GM12878 (cell line): ENCODE measurements at regions of chr9 and their contacts with region 1.

Region 1: GRCh38 chr9:131733541-131734061 is 6.3 kb downstream of the RAPGEF1 start:
- DNase-seq: no peak
- ATAC-seq: peak; percentile 2
- H3K4me3 ChIP-seq: peak overlapping the region; percentile 70
- H3K27ac ChIP-seq: peak overlapping the region; percentile 99
- H3K4me1 ChIP-seq: peaks cover 75% of the 10 kb centered on the region
- H3K27me3 ChIP-seq: no peaks in the 10 kb centered on the region
- CTCF ChIP-seq: no peak
- EP300 ChIP-seq: no peak
- POLR2A ChIP-seq: peak; percentile 42
- RAD21 ChIP-seq: no peak

Region 2: GRCh38 chr9:131270171-131271015 is 463.2 kb before region 1 on chr9:
- CTCF ChIA-PET with region 1: no interaction called
- POLR2A ChIA-PET with region 1: no interaction called
- RAD21 ChIA-PET with region 1: no interaction called
- SMC1A ChIA-PET with region 1: no interaction called
- in situ Hi-C with region 1: loop called (anchors 10 kb)
- intact Hi-C with region 1: no loop called
- DNase-seq: no peak
- ATAC-seq: peak; percentile 31
- H3K4me3 ChIP-seq: peak overlapping the region; percentile 99
- H3K27ac ChIP-seq: peak overlapping the region; percentile 92
- H3K4me1 ChIP-seq: peaks cover 46% of the 10 kb centered on the region
- H3K27me3 ChIP-seq: no peaks in the 10 kb centered on the region
- CTCF ChIP-seq: no peak
- EP300 ChIP-seq: no peak
- POLR2A ChIP-seq: peak; percentile 46; the same call in 1 of the 2 replicates
- RAD21 ChIP-seq: no peak

Region 3: GRCh38 chr9:131627648-131628458 is 105.7 kb before region 1 on chr9:
- CTCF ChIA-PET with region 1: interaction called, 19 read pairs
- POLR2A ChIA-PET with region 1: interaction called, 30 read pairs
- RAD21 ChIA-PET with region 1: interaction called, 52 read pairs
- SMC1A ChIA-PET with region 1: interaction called, 58 read pairs
- in situ Hi-C with region 1: no loop called
- intact Hi-C with region 1: loop called (anchors 5 kb)
- DNase-seq: no peak
- ATAC-seq: peak; percentile 48
- H3K4me3 ChIP-seq: no peak overlapping the region
- H3K27ac ChIP-seq: peak overlapping the region; percentile 88
- H3K4me1 ChIP-seq: peaks cover 44% of the 10 kb centered on the region
- H3K27me3 ChIP-seq: no peaks in the 10 kb centered on the region
- CTCF ChIP-seq: no peak
- EP300 ChIP-seq: no peak
- POLR2A ChIP-seq: 0 out of 2 replicates have a peak, but pooled peaks have one; percentile 22
- RAD21 ChIP-seq: no peak

Region 4: DNA sequence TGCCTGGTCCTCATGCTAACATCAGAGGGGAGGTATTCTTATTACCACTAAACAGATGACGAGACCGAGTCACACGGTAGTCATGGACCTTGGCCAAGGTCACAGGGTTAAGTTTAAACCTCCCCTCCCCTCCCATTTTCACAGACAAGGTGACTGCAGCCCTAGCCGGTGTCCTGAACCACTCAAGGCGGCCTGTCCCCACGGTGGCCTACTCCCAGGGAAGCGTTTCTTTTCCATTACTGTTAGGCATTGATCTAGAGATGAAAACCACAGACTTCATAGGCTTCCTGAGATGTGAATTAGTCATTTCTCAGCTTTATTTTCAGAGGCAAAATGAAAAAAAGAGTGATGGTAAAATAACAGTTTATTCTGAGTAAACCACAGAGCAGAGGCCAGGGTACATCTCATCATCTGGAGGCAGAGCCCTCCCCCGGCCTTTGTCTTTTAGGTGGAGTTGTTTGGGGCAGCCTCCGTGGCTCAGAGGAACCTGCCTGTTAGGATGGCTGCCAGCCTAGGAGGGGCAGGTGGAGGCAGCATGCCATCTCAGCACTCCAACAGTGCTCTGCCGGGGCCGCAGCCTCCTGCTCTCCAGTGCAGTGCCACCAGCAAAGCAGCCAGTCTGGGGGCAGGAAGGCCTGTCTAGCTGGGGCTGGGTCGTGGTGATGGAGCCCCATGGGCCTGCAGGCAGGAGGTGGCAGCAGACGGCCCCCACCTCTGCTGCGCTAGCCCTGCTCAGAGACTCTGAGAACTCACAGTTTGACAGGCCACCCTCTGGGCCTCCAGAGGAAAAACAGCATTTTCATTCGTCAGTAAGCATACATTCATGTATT is 64.9 kb before region 1 on chr9:
- CTCF ChIA-PET with region 1: interaction called, 197 read pairs
- POLR2A ChIA-PET with region 1: interaction called, 271 read pairs
- RAD21 ChIA-PET with region 1: interaction called, 408 read pairs
- SMC1A ChIA-PET with region 1: interaction called, 535 read pairs
- in situ Hi-C with region 1: no loop called
- intact Hi-C with region 1: loop called (anchors 2 kb)
- DNase-seq: peak; percentile 62
- ATAC-seq: peak; percentile 74
- H3K4me3 ChIP-seq: peak overlapping the region; percentile 54
- H3K27ac ChIP-seq: peak overlapping the region; percentile 88
- H3K4me1 ChIP-seq: peaks cover 72% of the 10 kb centered on the region
- H3K27me3 ChIP-seq: no peaks in the 10 kb centered on the region
- CTCF ChIP-seq: peak; percentile 3 to 5 (median 4); a peak in 1 of 6 replicates
- EP300 ChIP-seq: peak; percentile 25 to 47; a peak in 2 of 4 replicates
- POLR2A ChIP-seq: peak; percentile 11; the same call in 1 of the 2 replicates
- RAD21 ChIP-seq: no peak; the same call in 1 of the 2 replicates

Region 5: DNA sequence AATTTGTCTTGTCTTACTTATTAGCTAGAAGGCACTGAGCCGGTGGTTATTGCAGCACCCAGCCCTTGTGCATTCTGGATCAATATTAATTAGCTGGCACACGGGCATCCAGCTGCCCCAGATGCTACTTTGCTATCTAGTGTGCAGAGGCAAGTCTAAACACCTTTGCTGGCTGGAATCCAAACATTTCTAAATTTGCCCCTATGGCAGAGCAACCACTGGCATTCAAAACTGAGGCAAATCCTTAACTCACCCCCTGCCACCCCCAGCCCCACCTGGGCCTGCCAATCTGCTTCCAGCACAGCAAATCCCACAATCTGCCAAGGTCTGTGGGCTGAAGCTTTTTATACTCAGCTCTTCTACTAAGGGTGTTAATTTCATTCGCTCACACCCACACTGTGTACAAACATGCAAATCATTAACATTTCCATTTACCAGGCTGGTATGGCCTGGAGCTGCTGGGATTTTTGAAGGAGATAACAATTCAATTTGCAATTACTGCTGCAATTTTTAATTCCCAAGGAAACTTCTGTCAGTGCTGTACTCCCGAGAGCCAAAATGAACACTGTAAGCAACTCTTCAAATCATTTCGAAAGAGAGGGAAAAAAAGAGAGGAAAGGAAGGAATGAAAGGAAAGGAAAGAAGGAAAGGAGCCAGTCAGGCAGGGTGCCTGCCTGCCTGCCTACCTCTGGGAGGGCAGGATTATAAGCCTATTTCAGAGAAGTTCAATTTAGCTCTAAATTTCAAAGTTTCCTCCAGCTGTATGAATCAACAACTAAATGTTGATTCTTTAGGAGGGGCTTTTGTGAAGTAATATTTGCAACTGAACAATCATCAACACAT is 29.2 kb before region 1 on chr9:
- CTCF ChIA-PET with region 1: interaction called, 53 read pairs
- POLR2A ChIA-PET with region 1: interaction called, 291 read pairs
- RAD21 ChIA-PET with region 1: interaction called, 362 read pairs
- SMC1A ChIA-PET with region 1: interaction called, 416 read pairs
- in situ Hi-C with region 1: no loop called
- intact Hi-C with region 1: loop called (anchors 5 kb)
- DNase-seq: no peak
- ATAC-seq: peak; percentile 12; the same call in 1 of the 3 replicates
- H3K4me3 ChIP-seq: no peak overlapping the region
- H3K27ac ChIP-seq: peak overlapping the region; percentile 83
- H3K4me1 ChIP-seq: peaks cover 63% of the 10 kb centered on the region
- H3K27me3 ChIP-seq: no peaks in the 10 kb centered on the region
- CTCF ChIP-seq: no peak
- EP300 ChIP-seq: no peak
- POLR2A ChIP-seq: no peak
- RAD21 ChIP-seq: no peak

Region 6: DNA sequence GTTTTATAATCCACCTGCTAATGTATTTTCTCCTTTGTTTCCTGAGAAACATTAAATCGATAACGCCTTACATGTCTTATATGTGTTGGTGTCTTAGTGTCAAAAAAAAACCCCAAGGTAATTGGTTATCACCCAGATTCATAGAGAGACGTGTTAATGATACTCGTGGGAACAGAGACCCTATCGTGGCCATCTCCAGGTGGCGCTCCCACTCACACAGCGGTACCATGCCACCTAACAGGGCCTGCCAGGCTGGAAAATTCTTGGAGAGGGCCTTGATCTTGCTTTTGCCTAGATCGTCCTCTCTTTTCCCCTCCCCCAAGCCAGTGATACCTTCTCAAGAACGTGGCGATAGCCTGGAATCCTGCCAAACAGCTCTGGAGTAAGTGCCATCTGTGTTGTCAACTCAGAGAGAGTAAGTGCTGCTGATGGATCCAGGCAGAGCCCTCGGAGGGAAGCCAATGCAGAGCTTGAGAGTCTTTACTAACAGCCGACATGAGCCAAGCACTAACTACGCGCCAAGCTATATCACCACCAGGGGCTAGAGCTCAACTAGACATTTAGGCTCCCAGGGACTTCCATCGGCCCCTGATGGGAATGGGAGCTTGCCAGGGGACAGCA is 11.5 kb before region 1 on chr9:
- CTCF ChIA-PET with region 1: interaction called, 42 read pairs
- POLR2A ChIA-PET with region 1: interaction called, 291 read pairs
- RAD21 ChIA-PET with region 1: interaction called, 56 read pairs
- SMC1A ChIA-PET with region 1: interaction called, 79 read pairs
- in situ Hi-C with region 1: no loop called
- intact Hi-C with region 1: loop called (anchors 2 kb)
- DNase-seq: no peak
- ATAC-seq: no peak
- H3K4me3 ChIP-seq: no peak overlapping the region
- H3K27ac ChIP-seq: no peak overlapping the region
- H3K4me1 ChIP-seq: peaks cover 66% of the 10 kb centered on the region
- H3K27me3 ChIP-seq: no peaks in the 10 kb centered on the region
- CTCF ChIP-seq: no peak
- EP300 ChIP-seq: no peak
- POLR2A ChIP-seq: no peak
- RAD21 ChIP-seq: no peak